Activated B cell treated with CpG ODN at 0.5 μM for 24 hours (primary cell): ENCODE measurements at regions of chr1 and their contacts with region 1.

Region 1: GRCh38 chr1:59296358-59297256 is at the start of gene FGGY:
- DNase-seq: peak; percentile 85
- ATAC-seq: peak; percentile 88
- H3K4me3 Mint-ChIP-seq: peak within 1 kb of the TSS; percentile 92
- H3K27ac Mint-ChIP-seq: peak within 1 kb of the TSS; percentile 95
- H3K4me1 Mint-ChIP-seq: peaks cover 48% of the 10 kb centered on the region
- H3K27me3 Mint-ChIP-seq: no peaks in the 10 kb centered on the region
- CTCF ChIP-seq: no peak
- total RNA-seq, gene FGGY: 22.1 and 24.0 TPM in 2 replicates

Region 2: DNA sequence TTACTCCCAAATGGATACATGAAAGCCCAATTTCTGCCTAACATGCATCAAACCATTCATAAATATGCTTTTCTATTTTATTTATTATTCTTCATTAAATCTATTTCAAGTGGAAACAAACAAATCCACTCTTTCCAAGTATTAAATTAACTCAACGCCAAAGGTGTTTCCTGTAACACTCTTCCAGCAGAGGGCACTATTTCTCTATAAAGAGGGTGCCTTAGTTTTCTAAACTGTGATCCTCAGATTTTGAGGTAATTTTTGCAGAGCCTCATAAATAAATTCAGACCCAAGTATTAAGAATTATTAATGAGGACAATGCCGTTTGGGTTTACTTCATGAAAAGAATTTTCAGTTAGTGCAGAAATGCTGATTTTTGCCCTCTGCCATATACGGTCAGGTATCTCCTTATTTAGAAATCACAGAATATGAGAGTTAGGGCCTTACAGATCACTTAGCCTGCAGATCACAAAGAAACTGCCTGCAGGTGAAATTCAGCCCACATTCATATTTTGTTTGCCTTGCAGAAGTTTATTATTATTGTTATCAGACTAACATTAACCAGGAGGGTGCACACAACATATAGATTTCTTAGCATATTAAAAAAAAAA is 556.6 kb before region 1 on chr1:
- CTCF ChIA-PET with region 1: interaction called, 3 read pairs
- POLR2A ChIA-PET with region 1: no interaction called
- intact Hi-C with region 1: loop called (anchors 2 kb)
- DNase-seq: no peak
- ATAC-seq: peak; percentile 54
- H3K4me3 Mint-ChIP-seq: no peak overlapping the region
- H3K27ac Mint-ChIP-seq: no peak overlapping the region
- H3K4me1 Mint-ChIP-seq: no peaks in the 10 kb centered on the region
- H3K27me3 Mint-ChIP-seq: no peaks in the 10 kb centered on the region
- CTCF ChIP-seq: peak; percentile 87

Region 3: GRCh38 chr1:58763214-58763613 is 533.4 kb before region 1 on chr1:
- CTCF ChIA-PET with region 1: no interaction called
- POLR2A ChIA-PET with region 1: no interaction called
- intact Hi-C with region 1: no loop called
- DNase-seq: no peak
- ATAC-seq: no peak
- H3K4me3 Mint-ChIP-seq: no peak overlapping the region
- H3K27ac Mint-ChIP-seq: no peak overlapping the region
- H3K4me1 Mint-ChIP-seq: no peaks in the 10 kb centered on the region
- H3K27me3 Mint-ChIP-seq: peaks cover 5% of the 10 kb centered on the region
- CTCF ChIP-seq: no peak

Region 4: GRCh38 chr1:58903514-58904298 is 392.9 kb before region 1 on chr1:
- CTCF ChIA-PET with region 1: no interaction called
- POLR2A ChIA-PET with region 1: interaction called, 5 read pairs
- intact Hi-C with region 1: loop called (anchors 2 kb)
- DNase-seq: peak; percentile 75
- ATAC-seq: peak; percentile 90
- H3K4me3 Mint-ChIP-seq: peak overlapping the region; percentile 84
- H3K27ac Mint-ChIP-seq: peak overlapping the region; percentile 81
- H3K4me1 Mint-ChIP-seq: peaks cover 16% of the 10 kb centered on the region
- H3K27me3 Mint-ChIP-seq: no peaks in the 10 kb centered on the region
- CTCF ChIP-seq: no peak

Region 5: GRCh38 chr1:59020151-59020997 is 276.2 kb before region 1 on chr1:
- CTCF ChIA-PET with region 1: no interaction called
- POLR2A ChIA-PET with region 1: no interaction called
- intact Hi-C with region 1: loop called (anchors 2 kb)
- DNase-seq: no peak
- ATAC-seq: peak; percentile 96
- H3K4me3 Mint-ChIP-seq: peak overlapping the region; percentile 77
- H3K27ac Mint-ChIP-seq: peak overlapping the region; percentile 91
- H3K4me1 Mint-ChIP-seq: peaks cover 52% of the 10 kb centered on the region
- H3K27me3 Mint-ChIP-seq: no peaks in the 10 kb centered on the region
- CTCF ChIP-seq: no peak

Region 6: DNA sequence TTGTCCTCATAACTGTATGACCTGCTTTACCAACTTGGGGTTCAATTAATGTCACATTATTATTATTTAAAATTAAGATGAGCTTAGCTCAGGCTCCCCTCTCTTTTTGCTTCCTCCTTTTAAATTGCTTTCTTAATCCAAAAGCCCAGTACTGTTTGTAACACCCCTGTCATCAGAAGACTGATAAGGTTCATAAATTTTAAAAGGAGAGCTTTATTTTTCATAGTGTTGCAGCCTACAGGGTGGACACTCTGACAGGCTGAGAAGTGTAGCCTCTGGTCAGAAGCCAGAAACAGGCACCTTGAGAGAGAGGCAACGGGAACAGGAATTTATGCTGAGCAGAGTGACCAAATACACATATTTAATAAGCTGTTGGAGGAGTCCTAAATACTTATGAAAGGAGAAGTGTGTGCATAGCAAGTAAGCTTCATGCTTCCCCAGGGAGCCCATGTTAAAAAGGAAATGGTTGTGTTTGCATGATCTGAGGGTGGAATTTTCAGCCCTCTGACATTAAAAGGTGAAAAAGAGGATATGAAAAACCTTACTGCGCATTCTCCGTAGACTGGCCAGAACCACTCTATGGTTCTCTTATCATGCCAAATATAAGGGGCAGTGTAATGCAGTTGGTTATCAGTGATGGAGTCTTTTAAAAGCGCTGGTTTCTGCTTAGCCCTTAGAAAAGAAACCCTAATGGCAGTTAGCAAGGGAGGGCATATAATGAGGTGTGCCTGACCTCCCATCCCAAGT is 30.3 kb before region 1 on chr1:
- CTCF ChIA-PET with region 1: interaction called, 11 read pairs
- POLR2A ChIA-PET with region 1: interaction called, 39 read pairs
- intact Hi-C with region 1: loop called (anchors 1 kb)
- DNase-seq: peak; percentile 21
- ATAC-seq: peak; percentile 92
- H3K4me3 Mint-ChIP-seq: peak overlapping the region; percentile 75
- H3K27ac Mint-ChIP-seq: peak overlapping the region; percentile 97
- H3K4me1 Mint-ChIP-seq: peaks cover 63% of the 10 kb centered on the region
- H3K27me3 Mint-ChIP-seq: no peaks in the 10 kb centered on the region
- CTCF ChIP-seq: no peak

Region 7: DNA sequence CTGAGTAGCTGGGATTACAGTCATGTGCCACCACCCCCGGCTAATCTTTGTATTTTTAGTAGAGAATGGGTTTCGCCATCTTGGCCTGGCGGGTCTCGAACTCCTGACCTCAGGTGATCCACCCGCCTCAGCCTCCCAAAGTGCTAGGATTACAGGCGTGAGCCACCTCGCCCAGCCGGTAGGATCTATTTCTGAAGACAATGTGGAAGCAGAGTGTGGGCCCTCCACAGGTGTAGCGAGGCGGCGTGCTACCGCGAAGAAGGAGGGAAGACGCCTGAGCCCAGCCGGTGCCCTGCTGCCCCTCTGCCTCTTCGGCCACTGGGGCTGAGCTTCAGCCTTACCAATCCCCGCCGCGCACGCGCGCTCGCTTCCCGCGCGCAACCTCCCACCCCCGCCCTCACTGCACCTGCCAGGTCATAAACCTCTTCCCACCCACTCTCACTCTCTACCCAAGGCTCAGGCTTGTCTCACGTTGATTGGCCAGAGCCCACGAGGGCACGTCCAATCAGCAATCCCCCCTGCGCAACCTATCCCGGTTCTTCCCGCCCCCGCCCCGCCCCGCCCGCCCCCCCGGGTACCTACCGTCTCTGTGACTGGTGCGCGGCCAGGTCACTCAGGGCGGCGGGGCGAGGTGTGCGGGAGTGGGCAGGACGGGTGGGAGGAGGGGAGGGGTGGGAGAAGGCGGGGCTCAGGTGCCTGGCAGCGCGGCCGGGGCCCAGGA is 517.7 kb after region 1 on chr1:
- CTCF ChIA-PET with region 1: no interaction called
- POLR2A ChIA-PET with region 1: no interaction called
- intact Hi-C with region 1: loop called (anchors 1 kb)
- DNase-seq: peak; percentile 73
- ATAC-seq: peak; percentile 94
- H3K4me3 Mint-ChIP-seq: no peak overlapping the region
- H3K27ac Mint-ChIP-seq: peak overlapping the region; percentile 78
- H3K4me1 Mint-ChIP-seq: peaks cover 5% of the 10 kb centered on the region
- H3K27me3 Mint-ChIP-seq: peaks cover 3% of the 10 kb centered on the region
- CTCF ChIP-seq: no peak